OCI-LY7 (cell line): ENCODE measurements at regions of chr2 and their contacts with region 1.

Region 1: DNA sequence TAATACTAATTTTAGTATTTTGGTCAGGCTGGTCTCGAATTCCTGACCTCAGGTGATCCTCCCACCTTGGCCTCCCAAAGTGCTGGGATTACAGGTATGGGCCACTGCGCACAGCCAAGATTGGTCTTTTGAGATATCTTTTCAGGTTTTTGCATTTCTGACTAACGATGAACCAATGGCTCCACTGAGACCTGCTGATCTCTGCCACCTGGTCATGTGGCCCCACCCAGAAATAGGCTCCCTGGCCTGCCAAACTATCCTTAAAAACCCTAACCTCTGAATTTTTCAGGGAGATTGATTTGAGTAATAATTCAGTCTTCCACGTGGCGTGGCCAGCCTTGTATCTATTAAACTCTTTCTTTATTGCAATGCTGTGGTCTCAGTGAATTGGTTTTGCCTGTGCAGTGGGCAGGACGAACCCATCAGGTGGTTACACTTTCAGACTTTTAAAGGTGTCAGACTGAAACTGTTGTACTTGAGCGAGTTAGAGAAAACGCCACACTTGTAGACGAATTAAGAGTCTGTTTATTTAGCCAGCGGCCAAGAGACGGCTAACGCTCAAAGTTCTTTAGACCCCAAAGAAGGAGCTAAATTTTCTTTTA is 85.8 kb upstream of the MSH6 start:
- DNase-seq: peak; percentile 79
- H3K4me3 ChIP-seq: peak overlapping the region; percentile 99
- H3K27ac ChIP-seq: peak overlapping the region; percentile 97
- H3K4me1 ChIP-seq: peaks cover 58% of the 10 kb centered on the region
- CTCF ChIP-seq: no peak

Region 2: GRCh38 chr2:46621499-46621898 is 1075.6 kb before region 1 on chr2:
- CTCF ChIA-PET with region 1: no interaction called
- POLR2A ChIA-PET with region 1: no interaction called
- intact Hi-C with region 1: no loop called
- DNase-seq: no peak
- H3K4me3 ChIP-seq: no peak overlapping the region
- H3K27ac ChIP-seq: no peak overlapping the region
- H3K4me1 ChIP-seq: peaks cover 10% of the 10 kb centered on the region
- CTCF ChIP-seq: no peak

Region 3: GRCh38 chr2:47437287-47437686 is 259.8 kb before region 1 on chr2:
- CTCF ChIA-PET with region 1: no interaction called
- POLR2A ChIA-PET with region 1: interaction called, 3 read pairs
- intact Hi-C with region 1: loop called (anchors 10 kb)
- DNase-seq: peak; percentile 50
- H3K4me3 ChIP-seq: no peak overlapping the region
- H3K27ac ChIP-seq: no peak overlapping the region
- H3K4me1 ChIP-seq: peaks cover 4% of the 10 kb centered on the region
- CTCF ChIP-seq: peak; percentile 75

Region 4: GRCh38 chr2:47554311-47554905 is 142.7 kb before region 1 on chr2:
- CTCF ChIA-PET with region 1: no interaction called
- POLR2A ChIA-PET with region 1: no interaction called
- intact Hi-C with region 1: no loop called
- DNase-seq: peak; percentile 57
- H3K4me3 ChIP-seq: no peak overlapping the region
- H3K27ac ChIP-seq: no peak overlapping the region
- H3K4me1 ChIP-seq: peaks cover 7% of the 10 kb centered on the region
- CTCF ChIP-seq: no peak

Region 5: GRCh38 chr2:47640356-47640755 is 56.7 kb before region 1 on chr2:
- CTCF ChIA-PET with region 1: no interaction called
- POLR2A ChIA-PET with region 1: interaction called, 10 read pairs
- intact Hi-C with region 1: no loop called
- DNase-seq: no peak
- H3K4me3 ChIP-seq: no peak overlapping the region
- H3K27ac ChIP-seq: no peak overlapping the region
- H3K4me1 ChIP-seq: peaks cover 47% of the 10 kb centered on the region
- CTCF ChIP-seq: no peak

Region 6: GRCh38 chr2:47675196-47675825 is 21.8 kb before region 1 on chr2:
- CTCF ChIA-PET with region 1: no interaction called
- POLR2A ChIA-PET with region 1: interaction called, 13 read pairs
- intact Hi-C with region 1: no loop called
- DNase-seq: no peak
- H3K4me3 ChIP-seq: no peak overlapping the region
- H3K27ac ChIP-seq: no peak overlapping the region
- H3K4me1 ChIP-seq: no peaks in the 10 kb centered on the region
- CTCF ChIP-seq: no peak

Region 7: DNA sequence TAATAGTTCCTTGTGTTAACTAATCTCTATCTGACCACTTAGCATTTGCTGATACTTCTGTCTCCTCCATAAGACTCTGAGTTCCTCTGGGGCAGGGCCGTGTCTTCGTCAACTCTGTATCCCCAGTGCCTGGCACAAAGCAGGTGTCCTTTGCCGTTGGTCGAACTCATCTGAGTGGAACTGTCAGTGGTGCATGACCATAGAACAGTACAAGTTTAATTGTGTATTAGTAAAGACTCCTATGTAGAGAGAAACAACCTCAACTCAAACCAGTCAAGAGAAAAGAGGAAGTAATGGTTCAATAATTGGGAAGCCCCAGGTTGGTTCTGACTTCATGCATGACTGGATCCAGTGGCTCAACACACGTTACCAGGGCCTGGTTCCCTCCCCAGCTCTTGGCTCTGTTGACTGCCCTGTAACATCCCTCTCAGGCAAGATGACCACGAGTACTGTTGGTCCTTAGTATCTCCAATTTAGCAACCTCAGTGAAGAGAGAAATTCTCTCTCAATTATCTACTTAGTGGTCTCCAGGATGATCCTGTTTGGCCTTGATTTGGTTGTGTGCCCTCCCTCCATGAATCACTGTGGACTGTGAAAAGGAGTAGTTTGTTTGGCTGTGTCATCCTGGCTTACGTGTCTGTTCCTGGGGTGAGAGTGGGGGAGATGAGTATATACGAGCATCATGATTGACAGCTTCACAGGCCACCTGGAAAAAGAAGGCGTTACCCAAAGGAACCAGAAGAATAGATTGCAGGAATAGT is 27.3 kb after region 1 on chr2:
- CTCF ChIA-PET with region 1: no interaction called
- POLR2A ChIA-PET with region 1: interaction called, 242 read pairs
- intact Hi-C with region 1: loop called (anchors 1 kb)
- DNase-seq: peak; percentile 99
- H3K4me3 ChIP-seq: peak overlapping the region; percentile 28
- H3K27ac ChIP-seq: peak overlapping the region; percentile 100
- H3K4me1 ChIP-seq: peaks cover 96% of the 10 kb centered on the region
- CTCF ChIP-seq: no peak

Region 8: DNA sequence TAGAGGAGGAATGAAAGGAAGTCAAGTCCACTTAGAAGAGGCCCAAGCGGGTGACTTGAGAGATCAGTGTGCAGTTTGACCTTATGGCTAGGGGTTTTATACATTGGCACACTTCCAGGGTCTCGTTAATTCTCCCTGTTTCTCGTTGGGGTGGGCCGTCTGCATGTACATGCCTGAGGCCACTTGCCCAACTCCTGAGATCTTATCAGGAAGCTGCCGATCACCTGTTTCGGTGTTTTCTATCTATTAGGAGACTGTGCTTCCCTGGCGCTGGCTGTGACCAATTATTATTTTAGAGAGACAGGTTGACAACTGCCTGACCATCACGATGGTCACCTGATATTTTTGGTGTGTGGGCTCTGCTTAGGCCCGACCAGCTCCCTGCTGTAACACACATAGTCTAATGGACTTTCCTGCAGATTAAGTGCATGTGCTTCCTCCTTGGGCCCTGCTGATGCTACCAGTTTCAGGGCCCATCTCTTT is 54.8 kb after region 1 on chr2:
- CTCF ChIA-PET with region 1: no interaction called
- POLR2A ChIA-PET with region 1: interaction called, 12 read pairs
- intact Hi-C with region 1: no loop called
- DNase-seq: no peak
- H3K4me3 ChIP-seq: no peak overlapping the region
- H3K27ac ChIP-seq: peak overlapping the region; percentile 79
- H3K4me1 ChIP-seq: peaks cover 67% of the 10 kb centered on the region
- CTCF ChIP-seq: no peak

Region 9: GRCh38 chr2:47906157-47907038 is 209.3 kb after region 1 on chr2 and contains the start of gene FBXO11:
- CTCF ChIA-PET with region 1: no interaction called
- POLR2A ChIA-PET with region 1: interaction called, 4 read pairs
- intact Hi-C with region 1: loop called (anchors 10 kb)
- DNase-seq: peak; percentile 99
- H3K4me3 ChIP-seq: peak within 1 kb of the TSS; percentile 93
- H3K27ac ChIP-seq: peak within 1 kb of the TSS; percentile 95
- H3K4me1 ChIP-seq: peaks cover 31% of the 10 kb centered on the region
- CTCF ChIP-seq: no peak; the same call in 1 of the 2 replicates
- total RNA-seq, gene FBXO11: 24.7 and 31.9 TPM in 2 replicates